Naive thymus-derived CD8-positive, alpha-beta T cell (primary cell): ENCODE measurements at regions of chrX and their contacts with region 1.

Region 1: GRCh38 chrX:47193475-47194193 is at the start of gene UBA1:
- DNase-seq: peak; percentile 75 to 97 (median 90)
- ATAC-seq: peak; percentile 78 to 79
- H3K4me3 Mint-ChIP-seq: peak within 1 kb of the TSS; percentile 92 to 100 (median 98)
- H3K27ac Mint-ChIP-seq: peak within 1 kb of the TSS; percentile 92 to 100 (median 100)
- H3K4me1 Mint-ChIP-seq: peaks cover 25 to 65% (median 52%) of the 10 kb centered on the region in 4 donors
- H3K27me3 Mint-ChIP-seq: no peaks in the 10 kb centered on the region
- polyA plus RNA-seq, gene UBA1: 156 to 176 (median 163) TPM

Region 2: DNA sequence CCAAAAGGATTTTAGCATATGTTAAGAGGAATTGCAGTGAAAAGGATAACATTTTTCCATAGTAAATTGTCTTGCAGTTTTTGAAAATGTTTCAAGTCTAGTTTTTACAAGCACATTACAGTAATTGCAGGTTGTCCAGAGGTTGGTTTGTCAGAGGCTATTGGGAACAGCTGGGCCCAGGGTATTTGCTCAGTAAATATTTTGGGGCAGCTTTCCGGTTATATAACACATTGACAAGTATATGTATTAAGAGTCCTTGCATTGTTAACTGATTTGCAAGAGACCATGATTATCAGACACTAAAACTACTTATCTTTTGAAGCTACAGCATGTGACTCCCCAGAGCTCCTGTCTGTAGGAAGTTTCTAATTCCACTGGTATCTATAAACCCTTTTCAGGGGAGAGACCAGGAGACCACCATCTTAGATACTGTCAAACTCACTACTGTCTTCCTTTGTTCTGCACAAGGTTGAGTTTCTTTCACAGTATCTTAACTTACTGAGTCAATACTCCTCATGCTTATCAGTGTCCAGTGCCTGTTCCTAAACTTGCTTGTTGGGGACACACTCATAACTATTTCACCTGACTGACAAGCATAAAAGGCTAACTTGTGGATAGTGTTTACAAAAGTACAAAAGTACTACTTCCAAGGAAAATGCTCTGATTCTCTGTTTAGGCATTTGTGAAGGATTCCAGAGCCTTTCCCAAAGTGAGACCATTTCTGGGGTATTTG is 134.3 kb before region 1 on chrX:
- POLR2A ChIA-PET with region 1: no interaction called
- DNase-seq: no peak
- ATAC-seq: no peak
- H3K4me3 Mint-ChIP-seq: no peak overlapping the region
- H3K27ac Mint-ChIP-seq: no peak overlapping the region
- H3K4me1 Mint-ChIP-seq: no peaks in the 10 kb centered on the region
- H3K27me3 Mint-ChIP-seq: no peaks in the 10 kb centered on the region

Region 3: GRCh38 chrX:47248576-47248975 is 54.9 kb after region 1 on chrX:
- POLR2A ChIA-PET with region 1: no interaction called
- DNase-seq: no peak
- ATAC-seq: peak in 1 of 2 donors; percentile 15
- H3K4me3 Mint-ChIP-seq: no peak overlapping the region
- H3K27ac Mint-ChIP-seq: peak overlapping the region in 2 of 10 donors; percentile 43 to 91
- H3K4me1 Mint-ChIP-seq: peaks cover 0 to 3% (median 0%) of the 10 kb centered on the region in 4 donors
- H3K27me3 Mint-ChIP-seq: no peaks in the 10 kb centered on the region

Region 4: DNA sequence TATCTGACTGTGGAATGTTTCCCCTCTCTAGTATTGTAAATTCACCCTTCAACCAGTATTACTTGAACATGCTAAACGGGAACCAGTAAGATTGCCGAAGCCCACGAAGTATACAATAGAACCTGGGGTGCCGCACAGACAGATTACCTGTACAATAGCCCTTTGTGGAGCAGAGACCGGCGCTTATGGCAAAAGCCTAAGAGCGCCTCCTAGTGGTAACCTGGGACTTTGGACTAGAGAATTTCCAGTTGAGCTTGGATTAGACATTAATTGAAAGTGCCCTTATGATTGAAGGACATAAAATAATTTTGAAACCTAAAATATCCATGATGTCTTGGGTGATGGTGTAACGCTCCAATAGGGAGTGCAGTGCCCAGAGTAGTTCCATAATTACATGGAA is 190.9 kb after region 1 on chrX:
- POLR2A ChIA-PET with region 1: interaction called, 17 read pairs
- DNase-seq: peak; percentile 43 to 86 (median 66)
- ATAC-seq: peak; percentile 56 to 64
- H3K4me3 Mint-ChIP-seq: peak overlapping the region in 3 of 10 donors; percentile 37 to 74 (median 48)
- H3K27ac Mint-ChIP-seq: peak overlapping the region in 7 of 10 donors; percentile 49 to 85 (median 77)
- H3K4me1 Mint-ChIP-seq: peaks cover 11 to 32% (median 27%) of the 10 kb centered on the region in 4 donors
- H3K27me3 Mint-ChIP-seq: no peaks in the 10 kb centered on the region